SK-N-SH (cell line): ENCODE measurements at regions of chr11 and their contacts with region 1.

Region 1: GRCh38 chr11:65859200-65859811 is 927 bp upstream of the MUS81 start:
- DNase-seq: peak; percentile 90
- H3K4me3 ChIP-seq: peak overlapping the region; percentile 97 to 99
- H3K27ac ChIP-seq: peak overlapping the region; percentile 93
- H3K4me1 ChIP-seq: peaks cover 10 to 29% of the 10 kb centered on the region in 2 experiments
- H3K27me3 ChIP-seq: no peaks in the 10 kb centered on the region
- CTCF ChIP-seq: peak; percentile 25; the same call in 1 of the 2 replicates
- EP300 ChIP-seq: peak in 1 of 2 experiments; percentile 20; a peak in 1 of 4 replicates
- RAD21 ChIP-seq: no peak

Region 2: GRCh38 chr11:65802841-65803240 is 56.5 kb before region 1 on chr11:
- CTCF ChIA-PET with region 1: no interaction called
- POLR2A ChIA-PET with region 1: no interaction called
- DNase-seq: no peak
- H3K4me3 ChIP-seq: no peak overlapping the region
- H3K27ac ChIP-seq: no peak overlapping the region
- H3K4me1 ChIP-seq: no peaks in the 10 kb centered on the region
- H3K27me3 ChIP-seq: peaks cover 39% of the 10 kb centered on the region; the same call in 1 of the 2 replicates
- CTCF ChIP-seq: no peak
- EP300 ChIP-seq: no peak
- RAD21 ChIP-seq: no peak

Region 3: GRCh38 chr11:65833297-65834030 is 25.8 kb before region 1 on chr11 and contains the start of gene SNX32:
- CTCF ChIA-PET with region 1: interaction called, 9 read pairs
- POLR2A ChIA-PET with region 1: interaction called, 10 read pairs
- DNase-seq: peak; percentile 99
- H3K4me3 ChIP-seq: peak within 1 kb of the TSS; percentile 28 to 73
- H3K27ac ChIP-seq: peak within 1 kb of the TSS in 1 of 2 experiments; percentile 64; a peak in 1 of 4 replicates
- H3K4me1 ChIP-seq: peaks cover 0 to 13% of the 10 kb centered on the region in 2 experiments; a peak in 1 of 4 replicates
- H3K27me3 ChIP-seq: no peaks in the 10 kb centered on the region
- CTCF ChIP-seq: no peak
- EP300 ChIP-seq: no peak
- RAD21 ChIP-seq: no peak
- polyA plus RNA-seq, gene SNX32: 0.81 and 1.0 TPM in 2 replicates

Region 4: DNA sequence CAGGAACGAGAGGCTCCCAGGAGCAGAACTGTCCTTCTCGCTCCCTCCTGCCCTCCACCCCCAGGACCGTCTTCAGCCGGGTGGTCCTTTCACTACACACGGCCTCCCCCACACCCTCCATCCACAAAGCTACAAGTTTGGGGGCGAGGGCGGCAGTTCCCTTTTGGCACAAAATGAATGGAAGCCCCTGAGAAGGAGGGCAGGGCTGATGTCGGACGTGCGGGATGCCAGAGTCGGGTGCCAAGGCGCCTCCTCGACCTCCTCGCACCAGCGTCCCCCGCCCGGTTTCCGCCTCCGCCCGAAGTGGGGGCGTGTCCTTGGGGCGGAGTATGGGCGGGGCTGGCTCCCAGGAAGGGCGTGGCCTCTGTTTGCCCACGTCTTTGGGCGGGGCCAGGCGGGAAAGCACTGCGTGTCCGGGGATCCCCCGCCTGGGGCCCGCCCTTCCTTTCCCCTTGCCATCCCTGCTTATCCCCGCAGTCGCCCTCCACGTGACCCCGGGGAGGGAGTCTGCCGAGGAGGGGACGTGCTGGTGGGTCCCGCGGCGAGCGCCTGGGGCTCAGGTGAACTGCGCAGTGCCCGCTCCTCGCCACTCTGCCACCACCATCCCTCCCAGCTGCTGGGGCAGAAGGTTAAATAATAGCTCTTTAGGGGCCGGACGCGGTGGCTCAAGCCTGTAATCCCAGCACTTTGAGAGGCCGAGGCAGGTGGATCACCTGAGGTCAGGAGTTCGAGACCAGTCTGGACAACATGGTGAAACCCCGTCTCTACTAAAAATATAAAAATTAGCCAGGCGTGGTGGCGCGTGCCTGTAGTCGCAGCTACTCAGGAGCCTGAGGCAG is 14.2 kb after region 1 on chr11:
- CTCF ChIA-PET with region 1: interaction called, 374 read pairs
- POLR2A ChIA-PET with region 1: interaction called, 59 read pairs
- DNase-seq: peak; percentile 98
- H3K4me3 ChIP-seq: peak overlapping the region; percentile 54 to 73
- H3K27ac ChIP-seq: peak overlapping the region; percentile 77 to 93
- H3K4me1 ChIP-seq: peaks cover 19 to 23% of the 10 kb centered on the region in 2 experiments; a peak in 3 of 4 replicates
- H3K27me3 ChIP-seq: no peaks in the 10 kb centered on the region
- CTCF ChIP-seq: no peak
- EP300 ChIP-seq: no peak
- RAD21 ChIP-seq: no peak